Dorsolateral prefrontal cortex (tissue), 120 donors: ENCODE measurements at regions of chr1 and their contacts with region 1.

Region 1: GRCh38 chr1:151510957-151511635 is at the start of gene CGN:
- DNase-seq: peak; percentile 82 to 97 (median 92)
- H3K4me3 ChIP-seq: peak within 1 kb of the TSS; percentile 46 to 90 (median 77)
- H3K27ac ChIP-seq: peak within 1 kb of the TSS; percentile 63 to 97 (median 92)
- H3K27me3 ChIP-seq: no peaks in the 10 kb centered on the region
- CTCF ChIP-seq: peak in 9 of 56 donors; percentile 1 to 26 (median 20)
- total RNA-seq, gene CGN: 1.9 to 21.3 (median 7.9) TPM

Region 2: GRCh38 chr1:151494741-151495281 is 16.3 kb before region 1 on chr1:
- intact Hi-C with region 1: loop called in 1 of 2 experiments (anchors 2 kb)
- DNase-seq: no peak
- H3K4me3 ChIP-seq: peak overlapping the region in 15 of 59 donors; percentile 3 to 49 (median 20)
- H3K27ac ChIP-seq: peak overlapping the region; percentile 40 to 99 (median 91)
- H3K27me3 ChIP-seq: no peaks in the 10 kb centered on the region
- CTCF ChIP-seq: no peak

Region 3: DNA sequence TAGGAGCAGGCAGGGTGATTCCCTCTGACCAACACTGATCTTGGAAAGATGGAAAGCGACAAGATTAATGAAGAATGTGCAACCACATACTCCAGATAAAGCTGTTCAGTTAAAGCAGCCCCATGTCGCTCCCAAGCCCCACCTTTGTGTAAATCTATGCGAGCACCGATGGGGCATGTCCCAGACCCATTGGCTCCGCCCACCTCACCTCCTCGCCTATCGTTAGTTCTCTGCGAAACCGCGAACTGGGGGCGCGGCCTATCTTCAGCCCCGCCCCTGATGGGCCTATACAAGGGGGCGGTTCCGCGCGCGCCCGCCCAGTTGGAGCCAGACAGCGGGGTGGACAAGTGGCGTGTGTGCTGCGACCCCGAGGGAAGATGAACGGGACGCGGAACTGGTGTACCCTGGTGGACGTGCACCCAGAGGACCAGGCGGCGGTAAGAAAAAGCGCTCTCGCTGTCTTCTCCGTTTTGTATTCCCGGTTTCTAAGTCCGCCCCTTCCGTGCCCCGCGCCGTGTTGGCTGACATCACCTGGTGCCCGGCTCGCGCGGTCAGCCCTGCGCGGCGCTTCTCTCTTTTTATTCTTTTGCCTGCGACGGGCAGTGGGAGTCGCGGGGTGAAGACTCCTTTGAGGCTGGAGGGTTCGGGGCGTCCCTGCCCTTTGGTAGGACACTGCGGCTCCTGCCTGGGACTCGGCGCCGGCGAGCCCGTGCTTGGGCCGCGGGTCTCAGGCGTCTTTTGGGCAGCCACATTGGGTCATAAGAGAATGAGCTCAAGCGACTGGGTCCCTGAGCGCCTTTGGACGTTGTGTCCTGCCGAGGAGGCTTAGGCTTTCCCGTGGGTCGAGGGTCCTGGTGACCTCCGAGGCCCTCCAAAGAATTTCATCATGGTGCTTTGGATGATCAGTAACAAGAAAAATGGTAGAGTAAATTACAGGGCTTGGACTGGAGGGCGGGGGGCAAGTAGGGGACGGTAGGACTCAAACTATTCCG is 29.2 kb after region 1 on chr1 and contains the start of gene TUFT1:
- intact Hi-C with region 1: loop called in 1 of 2 experiments (anchors 2 kb)
- DNase-seq: peak; percentile 77 to 95 (median 92)
- H3K4me3 ChIP-seq: peak within 1 kb of the TSS; percentile 58 to 94 (median 80)
- H3K27ac ChIP-seq: peak within 1 kb of the TSS in 38 of 59 donors; percentile 1 to 75 (median 54)
- H3K27me3 ChIP-seq: no peaks in the 10 kb centered on the region
- CTCF ChIP-seq: peak in 19 of 56 donors; percentile 5 to 43 (median 19)
- total RNA-seq, gene TUFT1: 5.0 to 13.9 (median 9.3) TPM

Region 4: GRCh38 chr1:151619489-151620093 is 108.5 kb after region 1 on chr1:
- intact Hi-C with region 1: no loop called
- DNase-seq: no peak
- H3K4me3 ChIP-seq: peak overlapping the region in 1 of 59 donors; percentile 4
- H3K27ac ChIP-seq: peak overlapping the region in 38 of 59 donors; percentile 0 to 71 (median 30)
- H3K27me3 ChIP-seq: no peaks in the 10 kb centered on the region
- CTCF ChIP-seq: no peak